ENCODE measurements at regions of chr11 and their contacts with region 1.

Region 1: GRCh38 chr11:127493330-127494022 is 492.9 kb upstream of the KIRREL3 start:
- DNase-seq: peak in 1 of 2 donors; percentile 30
- H3K4me3 ChIP-seq: no peak overlapping the region
- H3K27ac ChIP-seq: no peak overlapping the region
- H3K4me1 ChIP-seq: no peaks in the 10 kb centered on the region
- H3K27me3 ChIP-seq: no peaks in the 10 kb centered on the region
- CTCF ChIP-seq: no peak
- EP300 ChIP-seq: no peak
- POLR2A ChIP-seq: no peak

Region 2: DNA sequence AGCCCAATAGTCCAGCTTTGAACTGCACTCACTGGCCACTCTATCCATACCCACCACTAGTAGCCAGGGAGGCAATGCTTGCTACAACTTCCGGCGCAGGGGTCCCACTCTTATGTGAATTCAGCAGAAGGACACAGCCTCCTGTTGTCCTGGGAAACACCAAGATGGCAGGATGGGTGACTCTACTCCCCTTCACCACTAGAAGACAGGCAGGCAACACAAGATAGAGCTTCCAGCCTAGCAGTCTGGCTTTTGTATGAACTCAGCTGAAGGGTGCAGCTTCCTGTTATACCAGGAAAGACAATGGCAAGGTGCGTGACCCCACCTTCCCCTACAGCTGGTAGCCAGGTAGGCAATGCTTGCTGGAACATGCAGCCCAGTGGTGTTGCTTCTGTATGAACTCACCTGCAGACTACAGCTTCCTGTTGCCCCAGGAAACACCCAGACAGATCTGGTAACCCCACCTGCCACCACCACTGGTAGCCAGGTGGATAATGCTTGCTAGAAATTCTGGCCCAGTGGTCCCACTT is 287.7 kb before region 1 on chr11:
- intact Hi-C with region 1: loop called (anchors 10 kb)
- DNase-seq: no peak
- H3K4me3 ChIP-seq: no peak overlapping the region
- H3K27ac ChIP-seq: no peak overlapping the region
- H3K4me1 ChIP-seq: no peaks in the 10 kb centered on the region
- H3K27me3 ChIP-seq: no peaks in the 10 kb centered on the region
- CTCF ChIP-seq: no peak
- EP300 ChIP-seq: no peak
- POLR2A ChIP-seq: no peak